Lower leg skin (tissue), 4 donors: ENCODE measurements at regions of chr7 and their contacts with region 1.

Region 1: DNA sequence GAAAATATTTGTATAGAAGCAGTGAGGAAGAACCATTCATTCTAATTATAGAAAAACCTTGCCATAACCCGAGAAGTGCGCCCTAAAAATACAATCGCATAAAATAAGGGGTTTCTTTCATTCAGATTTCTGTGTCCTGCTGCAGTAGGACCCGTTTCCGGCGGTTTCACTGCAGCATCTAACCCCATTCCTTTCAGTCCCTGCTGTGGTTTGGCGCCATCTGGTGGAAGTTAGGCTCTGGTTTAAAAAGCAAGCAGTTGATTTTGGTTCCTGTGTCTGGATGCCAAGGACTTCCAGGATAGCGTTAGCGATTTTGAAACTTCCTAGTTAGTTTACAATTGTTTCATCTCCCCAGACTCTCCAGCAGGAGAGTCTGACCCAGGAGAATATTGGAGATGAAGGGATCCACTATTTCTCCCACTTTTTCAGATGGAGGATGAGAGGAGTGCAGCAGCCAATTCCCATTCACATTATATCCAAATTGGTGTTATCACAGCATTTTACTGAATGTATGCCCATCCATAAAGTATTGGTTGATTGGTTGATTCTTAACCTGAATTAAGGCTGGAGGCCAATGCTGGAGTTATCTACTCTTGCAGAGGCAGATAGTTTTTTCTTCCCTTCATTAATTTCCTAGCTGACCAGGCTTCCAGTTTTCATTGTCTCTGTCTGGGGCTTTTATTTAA is 128.8 kb upstream of the CACNA2D1 start:
- DNase-seq: peak; percentile 87 to 96
- H3K4me3 ChIP-seq: no peak overlapping the region
- CTCF ChIP-seq: peak in 1 of 3 donors; percentile 16
- POLR2A ChIP-seq: no peak

Region 2: GRCh38 chr7:82044497-82045080 is 527.7 kb before region 1 on chr7:
- intact Hi-C with region 1: loop called (anchors 10 kb)
- DNase-seq: peak in 1 of 2 donors; percentile 34
- H3K4me3 ChIP-seq: no peak overlapping the region
- CTCF ChIP-seq: no peak
- POLR2A ChIP-seq: no peak

Region 3: GRCh38 chr7:82605247-82605872 is 33.0 kb after region 1 on chr7:
- intact Hi-C with region 1: no loop called
- DNase-seq: peak in 1 of 2 donors; percentile 29
- H3K4me3 ChIP-seq: no peak overlapping the region
- CTCF ChIP-seq: no peak
- POLR2A ChIP-seq: no peak